GM18951 (cell line): ENCODE measurements at regions of chr7 and their contacts with region 1.

Region 1: DNA sequence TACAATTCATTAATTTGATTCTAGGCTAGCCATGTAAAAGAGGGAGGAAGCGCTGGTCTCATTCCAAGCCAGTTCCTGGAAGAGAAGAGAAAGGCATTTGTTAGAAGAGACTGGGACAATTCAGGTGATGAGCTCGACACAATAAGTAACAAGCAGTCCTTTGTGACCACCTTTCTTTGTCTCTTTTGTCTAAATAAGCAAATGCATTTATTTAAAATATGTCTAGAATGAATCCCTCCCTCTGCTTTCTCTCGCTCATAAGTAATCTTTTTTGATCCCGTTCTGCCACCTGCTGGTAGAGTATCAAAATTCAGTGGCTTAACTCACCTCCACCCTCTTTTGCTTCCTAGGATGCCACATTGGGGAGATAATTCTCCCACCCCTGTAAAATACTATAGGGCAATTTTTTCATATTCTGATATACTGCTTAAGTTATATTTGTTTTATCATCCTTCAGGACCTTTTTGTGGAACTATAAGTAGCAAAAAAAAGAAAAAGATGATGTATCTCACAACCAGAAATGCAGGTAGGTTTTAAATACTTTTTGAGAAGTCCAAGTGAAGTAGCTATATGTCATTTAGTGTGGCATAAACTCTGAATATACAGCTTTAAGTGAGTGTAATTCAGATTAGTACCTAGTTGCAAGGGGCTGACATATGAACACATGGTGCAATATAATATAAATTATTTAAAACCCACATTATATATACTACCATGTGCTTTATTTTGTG is 91.5 kb downstream of the GSDME start:
- POLR2A ChIP-seq: no peak

Region 2: DNA sequence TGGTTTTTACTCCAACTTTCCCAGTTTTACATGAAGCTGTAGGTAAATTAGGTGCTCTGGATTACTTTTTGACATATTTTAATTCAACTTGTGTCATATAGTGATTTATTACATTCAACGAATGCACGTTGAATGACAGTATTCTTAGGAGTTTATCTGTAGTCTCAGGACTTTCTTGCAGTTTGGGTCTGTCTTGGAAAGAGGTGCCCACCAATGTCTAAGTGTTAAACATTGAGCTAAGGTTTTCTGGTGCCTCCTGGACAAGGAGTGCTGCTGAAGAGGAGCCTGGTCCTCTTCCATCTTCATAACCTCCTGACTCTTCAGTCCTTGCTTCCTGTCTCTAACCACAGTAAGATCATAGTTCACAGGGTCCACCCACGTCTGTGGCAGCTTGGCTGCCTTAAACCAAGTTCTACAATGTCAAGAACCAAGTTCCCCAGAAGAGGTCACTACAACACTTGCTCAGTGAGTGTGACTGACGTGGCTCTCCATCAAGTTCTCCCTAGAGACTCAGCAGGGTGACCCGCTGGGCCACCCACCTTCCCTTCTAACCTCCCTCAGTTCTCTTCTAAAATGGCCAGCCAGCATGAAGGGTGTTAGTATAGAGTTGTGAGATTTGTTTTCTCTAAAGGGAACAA is 375.6 kb before region 1 on chr7:
- in situ Hi-C with region 1: loop called (anchors 25 kb)
- POLR2A ChIP-seq: no peak

Region 3: GRCh38 chr7:24401628-24402593 is 263.8 kb before region 1 on chr7:
- in situ Hi-C with region 1: loop called (anchors 25 kb)
- POLR2A ChIP-seq: no peak

Region 4: DNA sequence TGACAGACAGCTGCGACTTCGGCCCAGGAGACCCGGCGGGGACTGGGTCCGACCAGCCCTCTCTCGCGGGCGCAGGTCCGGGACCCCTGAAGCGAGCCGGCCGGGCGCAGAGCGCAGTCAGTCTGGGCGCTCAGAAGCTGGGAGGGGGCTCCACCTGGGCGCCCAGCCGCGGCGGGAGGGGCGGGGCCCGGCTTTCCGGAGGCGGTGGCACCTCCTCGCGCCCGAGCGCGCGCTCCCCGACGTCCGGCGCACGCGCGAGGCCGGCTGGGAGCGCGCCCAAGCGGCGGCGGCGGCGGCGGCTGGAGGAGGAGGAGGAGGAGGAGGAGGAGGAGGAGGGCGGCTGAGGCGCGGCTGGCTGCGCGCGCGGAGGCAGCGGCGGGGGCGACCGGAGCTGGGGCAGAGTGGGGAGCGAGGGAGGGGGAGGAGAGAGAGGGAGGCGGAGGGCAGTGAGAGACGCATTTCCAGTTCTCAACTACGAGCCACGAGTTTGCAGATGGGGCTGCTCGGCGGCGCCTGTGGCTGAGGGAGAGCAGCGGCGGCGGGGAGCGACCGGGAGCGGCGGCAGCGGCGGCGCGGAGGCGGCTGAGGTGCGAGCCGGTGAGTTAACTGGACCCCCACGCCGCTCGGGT is 92.6 kb before region 1 on chr7 and contains the start of gene PALS2:
- in situ Hi-C with region 1: loop called (anchors 10 kb)
- POLR2A ChIP-seq: peak; percentile 58